Endothelial cell of umbilical vein (primary cell): ENCODE measurements at regions of chr21 and their contacts with region 1.

Region 1: GRCh38 chr21:31604591-31605190 is 54.8 kb upstream of the SOD1 start:
- DNase-seq: peak; percentile 66
- H3K4me3 ChIP-seq: no peak overlapping the region
- H3K27ac ChIP-seq: no peak overlapping the region
- H3K4me1 ChIP-seq: no peaks in the 10 kb centered on the region
- H3K27me3 ChIP-seq: no peaks in the 10 kb centered on the region
- CTCF ChIP-seq: peak; percentile 73 to 82
- POLR2A ChIP-seq: no peak

Region 2: DNA sequence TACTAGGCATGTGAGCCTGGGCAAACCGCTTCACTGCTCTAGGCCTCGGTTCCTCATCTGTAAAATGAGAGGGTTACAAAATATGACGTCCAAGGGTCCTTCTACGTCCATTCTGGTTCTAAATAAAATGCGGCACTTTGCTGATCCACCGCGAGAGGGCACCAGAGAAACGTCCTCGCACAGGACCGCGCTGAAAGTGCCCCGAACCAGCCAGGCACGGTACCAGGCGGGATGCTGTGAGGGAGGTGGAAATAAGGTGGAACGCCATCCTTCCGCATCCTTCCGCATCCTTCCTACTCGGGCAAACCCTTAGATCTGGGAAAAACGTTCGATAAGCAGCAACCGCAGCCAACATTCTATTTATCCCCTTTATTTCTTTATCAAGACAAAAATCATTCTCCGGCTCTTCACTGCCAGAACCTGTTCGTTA is 506.1 kb before region 1 on chr21:
- CTCF ChIA-PET with region 1: interaction called, 36 read pairs
- POLR2A ChIA-PET with region 1: no interaction called
- dilution Hi-C with region 1: no loop called
- intact Hi-C with region 1: loop called (anchors 1 kb)
- DNase-seq: peak; percentile 49
- H3K4me3 ChIP-seq: no peak overlapping the region
- H3K27ac ChIP-seq: no peak overlapping the region
- H3K4me1 ChIP-seq: no peaks in the 10 kb centered on the region
- H3K27me3 ChIP-seq: no peaks in the 10 kb centered on the region
- CTCF ChIP-seq: peak; percentile 78 to 80
- POLR2A ChIP-seq: no peak

Region 3: DNA sequence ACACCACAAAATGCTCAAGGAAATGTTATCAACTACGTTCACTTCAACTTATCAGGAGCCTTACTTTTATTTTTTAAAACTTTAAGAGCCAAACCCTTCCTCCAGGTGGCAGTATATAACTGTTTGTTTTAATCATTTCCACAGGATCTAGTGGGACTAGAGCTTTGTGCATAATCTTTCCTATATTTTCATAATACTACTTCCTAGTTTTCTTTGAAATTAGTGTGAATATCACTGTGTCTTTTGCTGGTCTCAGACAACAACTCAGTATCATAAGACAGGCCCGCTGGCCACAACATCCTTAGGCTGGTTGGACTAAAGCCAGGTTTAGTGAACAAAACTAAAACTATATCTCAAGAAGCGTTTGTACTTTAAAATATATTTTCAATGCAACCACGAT is 406.1 kb before region 1 on chr21:
- CTCF ChIA-PET with region 1: interaction called, 89 read pairs
- POLR2A ChIA-PET with region 1: no interaction called
- dilution Hi-C with region 1: no loop called
- intact Hi-C with region 1: loop called (anchors 1 kb)
- DNase-seq: peak; percentile 49
- H3K4me3 ChIP-seq: no peak overlapping the region
- H3K27ac ChIP-seq: no peak overlapping the region
- H3K4me1 ChIP-seq: no peaks in the 10 kb centered on the region
- H3K27me3 ChIP-seq: no peaks in the 10 kb centered on the region
- CTCF ChIP-seq: peak in 1 of 2 donors; percentile 18
- POLR2A ChIP-seq: no peak

Region 4: DNA sequence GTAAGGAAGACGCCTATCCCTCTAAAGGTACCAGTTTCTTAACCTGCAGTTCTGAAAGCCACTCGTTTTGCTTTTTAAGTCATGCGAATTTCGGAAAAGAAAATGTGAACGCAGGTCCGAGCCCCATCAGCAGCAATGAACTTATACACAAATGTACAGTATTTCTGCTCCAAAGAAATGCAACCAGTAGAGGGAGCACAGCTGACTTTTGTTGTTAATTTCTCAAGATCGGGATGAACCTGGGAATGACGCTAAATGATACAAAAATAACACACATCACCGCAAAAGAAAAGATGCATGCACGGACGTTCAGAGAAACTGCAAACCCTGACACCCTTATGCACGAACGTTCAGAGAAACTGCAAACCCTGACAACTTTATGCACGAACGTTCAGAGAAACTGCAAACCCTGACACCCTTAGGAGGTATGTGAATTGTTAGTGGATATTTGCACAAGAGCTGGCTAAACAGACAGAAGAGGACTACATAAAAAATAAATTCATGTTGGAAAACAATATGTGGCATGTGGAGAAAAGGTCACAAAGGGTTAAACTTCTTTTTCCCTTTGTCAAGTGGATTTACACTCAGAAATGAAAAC is 257.2 kb before region 1 on chr21:
- CTCF ChIA-PET with region 1: no interaction called
- POLR2A ChIA-PET with region 1: no interaction called
- dilution Hi-C with region 1: no loop called
- intact Hi-C with region 1: loop called (anchors 1 kb)
- DNase-seq: no peak
- H3K4me3 ChIP-seq: no peak overlapping the region
- H3K27ac ChIP-seq: no peak overlapping the region
- H3K4me1 ChIP-seq: no peaks in the 10 kb centered on the region
- H3K27me3 ChIP-seq: peaks cover 4 to 24% of the 10 kb centered on the region in 2 experiments
- CTCF ChIP-seq: peak in 1 of 2 donors; percentile 17
- POLR2A ChIP-seq: no peak

Region 5: DNA sequence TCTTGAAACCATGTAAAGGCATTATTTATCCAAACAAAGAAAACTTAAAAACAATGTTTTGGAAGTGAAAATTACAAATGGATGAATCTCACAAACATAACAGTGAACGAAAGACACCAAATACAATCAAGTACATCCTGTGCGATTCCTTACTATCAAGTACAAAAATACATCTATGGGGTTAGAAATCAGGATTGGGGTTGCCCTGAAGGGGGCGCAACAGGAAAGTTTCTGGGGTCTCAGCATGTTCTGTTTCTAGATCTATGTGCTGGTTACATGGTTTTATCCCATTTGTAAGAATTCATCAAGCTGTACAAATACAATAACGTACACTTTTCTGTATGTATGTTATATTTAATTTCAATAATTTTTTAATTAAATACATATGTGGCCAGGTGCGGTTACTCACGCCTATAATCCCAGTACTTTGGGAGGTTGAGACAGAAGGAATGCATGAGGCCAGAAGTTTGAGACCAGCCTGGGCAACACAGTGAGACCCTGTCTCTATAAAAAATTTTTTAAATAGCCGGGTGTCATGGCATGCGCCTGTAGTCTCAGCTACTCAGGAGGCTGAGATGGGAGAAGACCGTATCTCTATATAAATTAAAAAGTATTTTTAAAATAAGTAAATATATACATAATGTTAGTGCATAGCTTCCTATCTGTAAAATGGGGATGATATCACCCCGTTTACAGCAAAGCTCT is 66.7 kb before region 1 on chr21:
- CTCF ChIA-PET with region 1: no interaction called
- POLR2A ChIA-PET with region 1: no interaction called
- dilution Hi-C with region 1: no loop called
- intact Hi-C with region 1: loop called (anchors 2 kb)
- DNase-seq: no peak
- H3K4me3 ChIP-seq: no peak overlapping the region
- H3K27ac ChIP-seq: no peak overlapping the region
- H3K4me1 ChIP-seq: no peaks in the 10 kb centered on the region
- H3K27me3 ChIP-seq: no peaks in the 10 kb centered on the region
- CTCF ChIP-seq: no peak
- POLR2A ChIP-seq: no peak

Region 6: DNA sequence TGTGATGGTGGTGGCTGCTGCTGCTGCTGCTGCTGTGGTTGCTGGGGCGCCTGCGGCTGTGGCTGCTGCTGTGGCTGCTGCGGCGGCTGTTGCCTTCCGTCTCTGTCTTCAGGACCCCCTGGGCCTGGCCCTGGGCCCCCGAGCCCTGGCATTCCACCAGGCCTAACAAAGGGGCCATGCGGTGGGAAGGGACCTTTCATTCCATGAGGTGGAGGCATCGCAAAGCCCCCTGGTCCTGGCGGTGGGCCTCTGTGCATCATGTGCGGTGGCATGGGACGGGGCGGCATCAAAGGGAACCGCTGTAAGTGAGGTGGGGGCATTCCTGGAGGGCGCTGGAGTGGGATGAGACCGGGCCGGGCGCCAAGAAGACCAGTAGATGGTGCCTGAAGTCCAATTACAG is 67.2 kb after region 1 on chr21:
- CTCF ChIA-PET with region 1: no interaction called
- POLR2A ChIA-PET with region 1: no interaction called
- dilution Hi-C with region 1: no loop called
- intact Hi-C with region 1: no loop called
- DNase-seq: no peak
- H3K4me3 ChIP-seq: no peak overlapping the region
- H3K27ac ChIP-seq: no peak overlapping the region
- H3K4me1 ChIP-seq: peaks cover 13% of the 10 kb centered on the region
- H3K27me3 ChIP-seq: no peaks in the 10 kb centered on the region
- CTCF ChIP-seq: no peak
- POLR2A ChIP-seq: no peak